Psoas muscle (tissue), 8 donors: ENCODE measurements at regions of chr6 and their contacts with region 1.

Region 1: GRCh38 chr6:32700391-32701040 is 34.1 kb upstream of the HLA-DQB1 start:
- DNase-seq: no peak
- ATAC-seq: peak in 1 of 4 donors; percentile 73
- H3K4me3 ChIP-seq: no peak overlapping the region
- H3K27ac ChIP-seq: no peak overlapping the region
- H3K4me1 ChIP-seq: no peaks in the 10 kb centered on the region
- H3K27me3 ChIP-seq: peaks cover 0 to 16% (median 0%) of the 10 kb centered on the region in 3 donors
- CTCF ChIP-seq: peak; percentile 51

Region 2: DNA sequence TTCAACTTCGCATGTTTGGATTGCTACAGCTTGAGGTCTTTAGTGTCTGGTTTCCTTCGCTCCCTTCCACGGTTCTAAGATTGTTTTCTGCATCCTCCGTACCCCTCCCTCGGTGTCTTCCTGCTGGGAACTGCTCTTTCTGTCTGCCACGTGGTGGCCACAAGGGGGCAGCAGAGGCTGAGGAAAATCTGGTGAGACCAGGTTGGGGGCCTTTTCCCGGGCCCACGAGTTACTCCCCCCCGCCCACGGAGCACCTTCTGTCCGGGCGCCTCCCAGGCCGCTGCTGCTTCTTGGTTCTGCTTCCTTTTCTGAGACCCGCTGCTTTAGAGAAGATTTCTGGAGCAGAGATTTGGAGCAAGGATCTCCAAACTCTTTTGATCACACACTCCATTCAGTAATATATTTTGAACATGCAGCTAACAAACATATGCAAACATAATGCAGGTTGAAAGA is 455.5 kb before region 1 on chr6:
- intact Hi-C with region 1: loop called in 1 of 2 experiments (anchors 5 kb)
- DNase-seq: peak; percentile 85 to 89
- ATAC-seq: peak; percentile 73 to 93 (median 86)
- H3K4me3 ChIP-seq: peak overlapping the region; percentile 27
- H3K27ac ChIP-seq: peak overlapping the region; percentile 51
- H3K4me1 ChIP-seq: peaks cover 4% of the 10 kb centered on the region
- H3K27me3 ChIP-seq: no peaks in the 10 kb centered on the region
- CTCF ChIP-seq: peak; percentile 92

Region 3: GRCh38 chr6:32432050-32432450 is 268.5 kb before region 1 on chr6:
- intact Hi-C with region 1: loop called in 1 of 2 experiments (anchors 5 kb)
- DNase-seq: no peak
- ATAC-seq: no peak
- H3K4me3 ChIP-seq: no peak overlapping the region
- H3K27ac ChIP-seq: no peak overlapping the region
- H3K4me1 ChIP-seq: no peaks in the 10 kb centered on the region
- H3K27me3 ChIP-seq: peaks cover 0 to 3% (median 0%) of the 10 kb centered on the region in 3 donors
- CTCF ChIP-seq: peak; percentile 35

Region 4: GRCh38 chr6:32462609-32463008 is 237.9 kb before region 1 on chr6:
- intact Hi-C with region 1: no loop called
- DNase-seq: no peak
- ATAC-seq: no peak
- H3K4me3 ChIP-seq: no peak overlapping the region
- H3K27ac ChIP-seq: no peak overlapping the region
- H3K4me1 ChIP-seq: no peaks in the 10 kb centered on the region
- H3K27me3 ChIP-seq: peaks cover 0 to 4% (median 3%) of the 10 kb centered on the region in 3 donors
- CTCF ChIP-seq: no peak

Region 5: GRCh38 chr6:32879691-32880090 is 179.2 kb after region 1 on chr6:
- intact Hi-C with region 1: loop called in 1 of 2 experiments (anchors 10 kb)
- DNase-seq: peak in 1 of 2 donors; percentile 53
- ATAC-seq: no peak
- H3K4me3 ChIP-seq: no peak overlapping the region
- H3K27ac ChIP-seq: no peak overlapping the region
- H3K4me1 ChIP-seq: no peaks in the 10 kb centered on the region
- H3K27me3 ChIP-seq: no peaks in the 10 kb centered on the region
- CTCF ChIP-seq: no peak